ENCODE measurements at regions of chr19 and their contacts with region 1.

Region 1: DNA sequence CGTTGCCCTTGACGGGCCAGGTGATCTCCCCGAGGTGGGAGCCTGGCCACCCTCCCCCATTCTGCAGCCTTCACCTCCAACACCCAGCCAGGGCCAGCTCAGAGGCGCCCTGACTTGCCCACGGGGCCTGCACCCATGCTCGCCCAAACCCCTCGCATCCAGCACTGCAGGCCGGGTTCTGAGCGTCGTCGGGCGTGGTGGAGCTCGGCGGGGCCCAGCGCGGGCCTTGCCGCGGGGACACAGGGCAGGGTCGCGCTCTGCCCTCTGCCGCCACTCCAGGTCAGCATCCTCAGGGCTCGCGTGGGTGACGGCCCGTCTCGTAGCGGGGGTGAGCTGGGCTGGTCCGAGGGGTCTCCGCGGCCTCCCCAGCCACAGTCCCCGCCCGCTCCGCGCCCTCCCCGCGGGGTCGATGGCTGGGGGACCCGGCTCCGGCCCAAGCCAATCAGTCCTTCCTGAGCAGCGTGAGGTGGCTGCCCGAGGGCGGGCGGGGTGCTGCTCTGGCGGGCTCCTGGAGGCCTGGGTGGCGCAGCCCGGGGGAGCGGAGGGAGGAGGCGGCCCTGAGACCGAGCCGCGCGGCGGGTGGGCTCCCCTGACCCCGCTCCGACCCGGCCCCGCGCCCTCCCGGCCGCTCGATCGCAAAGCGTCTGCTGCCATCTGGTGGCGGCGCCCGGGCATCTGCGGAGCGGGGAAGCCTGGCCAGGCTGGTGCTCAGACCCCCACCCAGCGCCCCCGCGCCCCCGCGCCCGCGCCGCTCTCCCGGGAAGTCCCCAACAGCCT is 61.4 kb downstream of the CCNE1 start:
- DNase-seq: no peak
- H3K4me3 ChIP-seq: peak overlapping the region; percentile 19 to 31
- H3K27ac ChIP-seq: no peak overlapping the region
- H3K4me1 ChIP-seq: peaks cover 4% of the 10 kb centered on the region
- H3K27me3 ChIP-seq: peaks cover 4% of the 10 kb centered on the region
- CTCF ChIP-seq: peak; percentile 69 to 79 (median 75)
- POLR2A ChIP-seq: no peak

Region 2: DNA sequence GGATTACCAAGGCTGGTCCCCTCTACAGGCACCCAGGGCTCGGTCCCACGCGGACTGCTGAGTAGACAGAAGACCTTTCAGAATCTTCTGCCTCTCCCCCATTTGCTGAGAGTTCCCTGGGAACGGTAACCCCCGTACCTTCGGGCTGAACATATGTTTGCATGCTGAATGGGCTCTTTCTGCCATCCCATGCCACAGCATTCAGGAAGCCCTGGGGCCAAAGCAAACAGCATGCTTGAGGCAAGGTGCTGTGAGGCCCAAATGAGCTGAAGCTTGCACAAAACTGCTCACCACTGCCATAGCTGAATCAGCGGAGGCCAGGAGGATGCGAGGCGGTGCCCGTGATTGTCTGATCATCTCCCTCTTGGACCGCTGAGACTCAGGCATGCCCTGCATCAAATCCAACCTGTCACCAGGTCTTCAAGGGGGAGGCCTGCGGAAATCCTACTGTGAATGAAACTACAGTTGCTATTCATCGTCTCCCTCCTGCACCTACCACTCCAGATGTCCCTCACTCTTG is 141.8 kb before region 1 on chr19:
- intact Hi-C with region 1: loop called (anchors 5 kb)
- DNase-seq: no peak
- H3K4me3 ChIP-seq: no peak overlapping the region
- H3K27ac ChIP-seq: no peak overlapping the region
- H3K4me1 ChIP-seq: no peaks in the 10 kb centered on the region
- H3K27me3 ChIP-seq: no peaks in the 10 kb centered on the region
- CTCF ChIP-seq: no peak
- POLR2A ChIP-seq: no peak

Region 3: GRCh38 chr19:29771708-29772414 is 101.4 kb before region 1 on chr19:
- intact Hi-C with region 1: loop called (anchors 5 kb)
- DNase-seq: peak; percentile 22
- H3K4me3 ChIP-seq: no peak overlapping the region
- H3K27ac ChIP-seq: no peak overlapping the region
- H3K4me1 ChIP-seq: no peaks in the 10 kb centered on the region
- H3K27me3 ChIP-seq: no peaks in the 10 kb centered on the region
- CTCF ChIP-seq: peak; percentile 29 to 50 (median 42)
- POLR2A ChIP-seq: no peak

Region 4: DNA sequence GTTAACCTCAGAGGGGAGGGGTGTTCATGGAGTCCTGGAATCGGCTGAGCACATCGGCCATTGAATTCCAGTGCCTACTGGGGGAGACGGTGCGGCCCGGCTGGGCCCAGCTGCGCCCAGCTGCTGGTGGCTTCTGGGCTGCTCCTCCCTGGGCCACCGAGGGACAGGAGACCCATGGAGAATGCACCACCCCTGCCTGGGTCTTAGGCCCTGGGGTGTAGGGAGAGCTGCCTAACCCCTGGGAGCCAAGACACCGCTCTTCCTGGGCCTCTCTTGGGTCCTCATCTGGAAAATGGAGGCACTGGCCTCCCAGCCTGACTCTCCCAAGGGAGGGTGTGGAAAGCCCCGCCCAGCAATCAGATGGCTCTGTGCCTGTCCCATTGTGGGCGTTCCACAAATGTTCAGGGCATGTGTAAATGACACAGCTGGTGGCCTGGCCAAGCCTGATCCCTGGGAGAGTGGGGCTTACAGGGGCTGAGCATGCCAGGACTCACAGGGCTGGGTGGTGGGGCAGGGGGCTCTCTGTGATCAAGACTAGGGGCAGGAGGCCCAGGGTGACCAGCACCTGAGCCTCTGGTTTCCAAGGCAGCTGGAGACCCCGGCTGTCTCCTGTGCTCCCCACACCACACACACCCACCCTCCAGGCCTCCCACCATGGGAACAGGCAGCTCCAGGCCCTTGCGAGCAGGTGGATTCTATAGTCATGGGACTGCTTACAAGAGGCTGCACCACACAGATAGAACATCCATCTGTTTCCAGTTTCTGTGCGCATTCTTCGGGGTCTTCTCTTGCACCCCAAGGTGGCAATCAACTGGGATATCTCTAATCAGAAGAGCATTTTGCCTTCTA is 219.7 kb after region 1 on chr19:
- intact Hi-C with region 1: no loop called
- DNase-seq: no peak
- H3K4me3 ChIP-seq: no peak overlapping the region
- H3K27ac ChIP-seq: no peak overlapping the region
- H3K4me1 ChIP-seq: no peaks in the 10 kb centered on the region
- H3K27me3 ChIP-seq: no peaks in the 10 kb centered on the region
- CTCF ChIP-seq: no peak
- POLR2A ChIP-seq: no peak

Measured in prostate gland (tissue), 2 donors.